ENCODE measurements at regions of chr17 and their contacts with region 1.

Region 1: DNA sequence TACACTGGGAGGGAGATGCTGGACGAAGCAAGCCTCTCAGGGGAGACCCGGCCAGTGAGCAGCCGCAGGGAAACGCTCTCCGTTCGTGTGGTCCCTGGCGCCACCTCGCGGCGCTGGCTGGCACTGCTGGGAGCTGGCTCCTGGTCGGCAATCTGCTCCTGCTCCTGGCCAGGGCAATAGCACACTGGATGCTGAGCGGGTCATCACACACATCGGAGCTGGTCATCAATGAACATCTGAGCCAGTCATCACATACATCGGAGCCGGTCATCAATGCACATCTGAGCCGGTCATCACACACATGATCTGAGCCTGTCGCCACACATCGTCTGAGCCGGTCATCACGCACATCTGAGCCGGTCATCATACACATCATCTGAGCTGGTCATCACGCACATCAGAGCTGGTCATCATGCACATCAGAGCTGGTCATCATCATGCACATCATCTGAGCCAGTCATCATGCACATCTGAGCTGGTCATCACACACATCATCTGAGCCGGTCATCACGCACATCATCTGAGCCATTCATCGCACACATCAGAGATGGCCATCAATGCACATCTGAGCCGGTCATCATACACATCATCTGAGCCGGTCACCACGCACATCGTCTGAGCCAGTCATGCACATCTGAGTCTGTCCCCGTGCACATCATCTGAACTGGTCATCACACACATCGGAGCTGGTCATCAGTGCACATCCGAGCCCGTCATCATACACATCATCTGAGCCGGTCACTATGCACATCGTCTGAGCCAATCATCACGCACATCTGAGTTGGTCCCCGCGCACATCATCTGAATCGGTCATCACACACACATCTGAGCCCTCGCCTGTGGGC is 217.3 kb downstream of the RBFOX3 start:
- DNase-seq: peak; percentile 81
- ATAC-seq: peak; percentile 83
- H3K4me3 Mint-ChIP-seq: no peak overlapping the region
- H3K27ac Mint-ChIP-seq: no peak overlapping the region
- H3K4me1 Mint-ChIP-seq: no peaks in the 10 kb centered on the region
- H3K27me3 Mint-ChIP-seq: peaks cover 45% of the 10 kb centered on the region
- CTCF ChIP-seq: peak; percentile 82

Region 2: DNA sequence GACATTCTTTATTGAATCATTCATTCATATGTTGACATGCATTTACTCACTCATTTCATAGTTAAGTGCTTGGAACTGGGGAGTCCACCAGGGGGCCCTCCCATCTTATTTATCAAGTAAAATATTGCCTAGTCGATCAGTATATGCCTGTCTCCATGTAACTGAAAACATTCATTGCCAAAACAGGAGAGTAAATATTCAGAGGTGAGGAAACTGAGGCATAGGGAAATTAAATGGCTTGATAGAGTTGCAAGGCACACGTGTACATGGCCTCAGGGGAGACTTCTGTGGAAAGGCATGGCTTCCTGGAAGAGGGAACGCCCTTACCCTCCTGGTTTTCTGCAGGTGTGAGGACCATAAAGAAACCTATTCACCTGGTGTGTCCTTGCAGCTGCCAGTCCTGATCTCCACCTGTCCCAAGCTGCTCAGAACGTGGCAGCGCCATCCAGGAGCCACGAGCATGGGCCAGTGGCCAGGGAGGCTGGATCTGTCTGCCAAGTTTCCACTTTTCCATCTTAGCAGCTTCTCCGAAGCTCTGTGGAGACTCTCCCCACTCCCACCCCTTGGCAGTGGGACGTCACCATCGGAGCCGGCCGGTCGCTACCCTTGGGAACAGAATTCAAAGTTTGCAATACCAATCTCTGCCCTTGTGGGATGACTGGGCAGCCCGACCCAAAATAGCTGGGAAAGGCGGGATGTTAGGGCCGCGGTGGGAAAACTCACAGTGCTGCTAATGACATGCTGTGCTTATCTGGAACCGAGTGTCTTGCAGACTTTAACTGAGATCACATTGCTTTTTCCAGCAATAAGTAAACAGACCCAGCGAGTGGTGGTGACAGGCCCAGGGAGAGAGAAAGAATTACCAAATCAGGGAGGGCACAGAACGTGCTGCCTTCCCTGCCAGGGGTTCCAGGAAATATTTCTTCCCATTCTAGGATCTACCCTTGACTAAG is 373.7 kb before region 1 on chr17:
- CTCF ChIA-PET with region 1: interaction called, 13 read pairs
- POLR2A ChIA-PET with region 1: no interaction called
- intact Hi-C with region 1: no loop called
- DNase-seq: peak; percentile 84
- ATAC-seq: peak; percentile 67
- H3K4me3 Mint-ChIP-seq: no peak overlapping the region
- H3K27ac Mint-ChIP-seq: no peak overlapping the region
- H3K4me1 Mint-ChIP-seq: peaks cover 3% of the 10 kb centered on the region
- H3K27me3 Mint-ChIP-seq: peaks cover 4% of the 10 kb centered on the region
- CTCF ChIP-seq: peak; percentile 71

Region 3: GRCh38 chr17:79065105-79065670 is 328.4 kb before region 1 on chr17:
- CTCF ChIA-PET with region 1: interaction called, 30 read pairs
- POLR2A ChIA-PET with region 1: no interaction called
- intact Hi-C with region 1: no loop called
- DNase-seq: peak; percentile 79
- ATAC-seq: peak; percentile 82
- H3K4me3 Mint-ChIP-seq: peak overlapping the region; percentile 23
- H3K27ac Mint-ChIP-seq: peak overlapping the region; percentile 55
- H3K4me1 Mint-ChIP-seq: peaks cover 5% of the 10 kb centered on the region
- H3K27me3 Mint-ChIP-seq: peaks cover 2% of the 10 kb centered on the region
- CTCF ChIP-seq: peak; percentile 75

Region 4: GRCh38 chr17:79087428-79088143 is 306.0 kb before region 1 on chr17:
- CTCF ChIA-PET with region 1: interaction called, 49 read pairs
- POLR2A ChIA-PET with region 1: interaction called, 4 read pairs
- intact Hi-C with region 1: loop called (anchors 5 kb)
- DNase-seq: peak; percentile 85
- ATAC-seq: peak; percentile 93
- H3K4me3 Mint-ChIP-seq: no peak overlapping the region
- H3K27ac Mint-ChIP-seq: no peak overlapping the region
- H3K4me1 Mint-ChIP-seq: peaks cover 2% of the 10 kb centered on the region
- H3K27me3 Mint-ChIP-seq: no peaks in the 10 kb centered on the region
- CTCF ChIP-seq: peak; percentile 80

Region 5: DNA sequence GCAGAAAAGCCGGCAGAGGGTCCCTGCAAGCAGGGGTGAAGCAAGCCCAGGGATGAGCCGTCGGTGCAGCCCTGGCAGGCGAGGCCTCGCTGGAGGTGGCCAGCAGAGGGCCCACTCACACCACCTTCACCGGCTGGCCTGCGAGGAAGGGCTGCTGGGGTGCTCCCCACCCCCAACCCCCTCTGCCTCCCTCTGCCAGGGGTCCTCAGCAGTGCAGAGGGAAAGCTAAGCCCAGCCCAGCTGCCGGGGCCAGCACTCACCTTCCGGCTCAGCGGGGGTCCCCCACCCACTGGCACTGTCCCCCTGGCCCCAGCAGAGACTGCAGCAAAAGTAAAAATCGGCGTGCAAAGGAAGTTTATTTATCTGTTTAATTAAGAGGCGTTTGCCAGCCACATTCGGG is 205.5 kb before region 1 on chr17:
- CTCF ChIA-PET with region 1: interaction called, 19 read pairs
- POLR2A ChIA-PET with region 1: no interaction called
- intact Hi-C with region 1: no loop called
- DNase-seq: peak; percentile 31
- ATAC-seq: peak; percentile 49
- H3K4me3 Mint-ChIP-seq: no peak overlapping the region
- H3K27ac Mint-ChIP-seq: no peak overlapping the region
- H3K4me1 Mint-ChIP-seq: no peaks in the 10 kb centered on the region
- H3K27me3 Mint-ChIP-seq: peaks cover 52% of the 10 kb centered on the region
- CTCF ChIP-seq: peak; percentile 32